ENCODE measurements at regions of chr13 and their contacts with region 1.

Region 1: DNA sequence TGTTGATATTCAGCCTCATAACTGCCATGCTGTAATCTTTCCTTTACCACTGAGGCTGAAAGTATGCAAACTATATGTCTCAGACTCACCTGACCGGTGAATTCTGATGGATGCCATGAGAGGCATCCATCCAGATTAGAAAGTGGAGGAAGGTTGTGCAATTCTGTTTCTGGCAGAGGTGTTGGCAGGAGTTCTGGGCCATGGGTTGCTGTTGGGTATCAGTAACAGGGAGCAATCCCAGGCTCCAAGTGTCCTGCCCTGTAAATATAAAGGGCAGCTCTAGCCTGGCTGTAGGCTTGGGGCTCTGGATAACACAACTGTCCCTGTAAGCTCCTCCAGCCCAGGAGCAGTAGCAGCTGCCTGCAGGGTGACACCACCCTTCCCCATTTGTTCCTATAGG is 77.4 kb upstream of the ABCC4 start:
- DNase-seq: no peak
- ATAC-seq: peak in 1 of 2 donors; percentile 53

Region 2: DNA sequence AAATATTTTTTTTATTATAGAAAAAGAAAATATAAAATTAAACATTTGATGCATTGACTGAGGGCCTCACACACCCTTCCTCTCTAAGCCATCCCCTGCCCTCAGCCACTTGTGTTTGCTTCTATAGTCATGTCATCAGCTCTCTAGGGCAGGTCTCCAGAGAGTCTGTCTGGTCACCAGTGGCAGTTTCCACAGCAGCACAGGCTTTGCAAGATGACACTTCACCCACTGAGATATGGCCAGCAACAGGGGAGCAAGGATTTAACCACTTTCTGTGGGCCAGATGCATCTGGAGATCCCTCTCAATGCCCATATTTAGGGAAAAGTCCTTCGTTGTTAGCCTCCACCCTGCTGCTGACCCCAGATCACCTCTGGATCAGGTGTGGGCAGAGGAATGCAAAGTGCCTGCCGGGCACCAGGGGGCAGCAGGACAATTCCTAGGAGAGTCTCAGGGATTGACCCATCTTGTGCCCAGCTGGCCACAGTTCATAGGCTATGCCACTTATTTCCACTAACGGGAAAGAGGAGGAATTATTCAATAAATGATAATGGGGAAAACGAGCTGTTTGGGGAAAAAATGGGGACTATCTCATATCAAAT is 82.2 kb before region 1 on chr13:
- intact Hi-C with region 1: loop called in 1 of 2 experiments (anchors 2 kb)
- DNase-seq: peak; percentile 37
- ATAC-seq: peak in 1 of 2 donors; percentile 26

Measured in left cardiac atrium (tissue), 4 donors.